Motor neuron (in vitro differentiated cells): ENCODE measurements at regions of chr17 and their contacts with region 1.

Region 1: GRCh38 chr17:49997791-49998703 is 3.0 kb upstream of the DLX3 start:
- ATAC-seq: peak; percentile 27 to 87 (median 76)
- H3K4me3 ChIP-seq: no peak overlapping the region
- H3K27ac ChIP-seq: no peak overlapping the region
- H3K4me1 ChIP-seq: peaks cover 0 to 12% of the 10 kb centered on the region in 2 donors

Region 2: DNA sequence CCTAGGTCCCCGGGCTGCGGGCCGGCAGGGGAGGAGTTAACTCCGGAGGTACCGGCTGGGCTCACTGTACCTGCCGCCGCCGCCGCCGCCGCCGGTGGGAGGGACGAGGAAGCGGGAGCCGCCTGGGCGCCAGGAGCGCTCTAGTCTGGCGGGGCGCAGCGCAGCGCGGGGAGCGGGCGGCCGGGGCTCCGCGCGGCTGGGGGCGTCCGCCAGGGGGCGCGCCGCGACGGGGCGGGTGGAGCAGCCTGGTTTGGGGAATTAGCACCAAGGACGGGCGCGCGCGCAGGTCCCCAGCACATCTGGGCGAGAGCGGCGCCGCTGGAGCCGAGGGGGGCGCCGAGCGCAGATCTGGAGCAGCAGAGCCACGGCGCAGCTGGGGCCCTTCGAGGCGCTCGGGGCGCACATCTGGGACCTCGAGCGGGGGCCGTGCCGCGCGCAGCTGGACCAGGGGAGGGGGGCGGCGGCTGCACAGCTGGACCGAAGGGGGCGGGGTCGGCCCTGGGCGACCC is 422.4 kb before region 1 on chr17 and contains the start of gene NXPH3:
- in situ Hi-C with region 1: loop called in 6 of 9 experiments (anchors 10 to 25 kb)
- ATAC-seq: peak; percentile 28 to 71 (median 41)
- H3K4me3 ChIP-seq: peak within 1 kb of the TSS; percentile 34 to 48 (median 39)
- H3K27ac ChIP-seq: no peak within 1 kb of the TSS
- H3K4me1 ChIP-seq: peaks cover 0 to 4% of the 10 kb centered on the region in 2 donors
- total RNA-seq, gene NXPH3: 0.16 to 1.3 (median 0.39) TPM

Region 3: DNA sequence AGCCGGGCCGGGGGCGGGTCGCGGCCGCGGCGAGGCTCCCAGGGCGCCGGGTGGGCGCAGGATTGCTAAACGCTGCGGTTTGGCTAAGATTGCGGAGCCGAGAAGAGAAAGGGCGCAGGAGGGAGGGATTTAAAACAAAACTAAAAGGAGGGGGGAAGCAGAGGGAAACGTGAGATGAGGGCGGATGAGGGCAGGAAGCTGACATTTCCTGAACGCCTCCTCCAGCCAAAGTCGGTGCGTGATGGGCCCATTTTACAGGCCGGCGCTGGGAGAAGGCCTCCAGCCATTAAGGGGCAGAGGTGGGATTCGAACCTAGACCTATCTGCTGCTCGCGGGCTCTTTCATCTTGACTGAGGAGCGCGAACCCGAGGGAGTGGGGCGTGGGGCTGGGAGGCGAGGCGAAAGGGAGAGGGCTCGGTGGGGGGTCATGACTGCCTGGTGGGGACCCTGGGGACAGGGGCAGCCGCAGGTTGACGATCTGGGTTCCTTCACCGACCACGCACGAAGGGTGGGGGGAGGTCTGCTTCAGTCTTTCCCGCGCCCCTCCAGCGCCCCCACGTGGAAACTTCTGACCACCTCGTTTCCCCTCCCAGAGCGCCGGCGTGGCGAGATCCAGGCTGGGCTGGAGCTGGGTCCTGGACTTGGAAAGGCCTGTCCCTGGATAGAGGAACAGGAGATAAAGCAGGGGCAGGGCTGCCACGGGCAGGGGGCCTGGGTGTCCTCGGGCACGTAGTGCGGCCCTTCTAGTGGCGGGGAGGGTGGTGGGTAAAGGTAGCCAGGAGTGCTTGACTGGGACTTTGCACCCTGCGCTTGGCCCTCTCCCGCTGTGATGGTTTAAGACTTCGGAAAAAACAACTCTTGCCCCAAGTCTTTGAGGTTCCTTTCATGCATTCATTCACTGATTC is 146.4 kb before region 1 on chr17:
- in situ Hi-C with region 1: loop called in 3 of 9 experiments (anchors 10 to 25 kb)
- ATAC-seq: peak; percentile 67 to 89 (median 74)
- H3K4me3 ChIP-seq: peak overlapping the region; percentile 8 to 33 (median 27)
- H3K27ac ChIP-seq: no peak overlapping the region
- H3K4me1 ChIP-seq: peaks cover 3 to 7% of the 10 kb centered on the region in 2 donors

Region 4: DNA sequence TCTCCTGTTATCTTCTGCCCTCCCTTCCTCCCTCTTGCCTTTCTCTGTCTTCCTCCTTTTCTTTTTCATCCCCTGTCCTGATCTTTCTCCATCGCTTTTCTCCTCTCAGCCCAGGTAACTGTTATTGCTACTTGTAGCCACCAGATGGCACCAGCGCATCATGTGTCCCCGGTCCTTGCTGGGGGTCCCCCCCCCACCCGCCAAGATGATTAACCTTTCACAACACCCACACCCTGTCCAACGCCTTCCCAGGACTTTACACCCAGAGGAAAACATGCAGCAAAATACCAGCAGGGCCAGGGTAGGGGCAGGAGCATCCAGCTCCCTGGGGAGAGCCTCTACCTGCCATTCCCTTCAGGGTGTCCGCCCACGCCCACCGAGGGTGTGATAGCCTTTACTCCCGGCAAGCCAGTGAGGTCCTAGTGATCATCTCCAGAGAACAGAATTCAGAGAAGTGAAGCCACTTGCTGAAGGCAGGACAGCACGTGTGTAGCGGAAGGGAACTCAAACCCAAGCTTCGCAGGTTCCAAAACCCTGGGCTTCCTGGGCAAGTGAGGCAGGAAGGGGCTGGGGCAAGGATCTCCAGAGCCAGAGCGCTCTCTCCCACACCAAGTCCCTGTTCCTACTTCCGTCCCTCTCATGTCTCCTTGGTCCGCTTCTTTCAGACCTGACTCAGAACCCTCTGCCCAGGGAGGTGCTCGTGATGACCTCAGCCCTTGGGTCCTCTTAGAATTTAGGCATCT is 136.7 kb before region 1 on chr17:
- in situ Hi-C with region 1: loop called in 5 of 9 experiments (anchors 10 to 25 kb)
- ATAC-seq: peak in 7 of 8 experiments; percentile 7 to 77 (median 22)
- H3K4me3 ChIP-seq: no peak overlapping the region
- H3K27ac ChIP-seq: no peak overlapping the region
- H3K4me1 ChIP-seq: peaks cover 5 to 10% of the 10 kb centered on the region in 2 donors

Region 5: DNA sequence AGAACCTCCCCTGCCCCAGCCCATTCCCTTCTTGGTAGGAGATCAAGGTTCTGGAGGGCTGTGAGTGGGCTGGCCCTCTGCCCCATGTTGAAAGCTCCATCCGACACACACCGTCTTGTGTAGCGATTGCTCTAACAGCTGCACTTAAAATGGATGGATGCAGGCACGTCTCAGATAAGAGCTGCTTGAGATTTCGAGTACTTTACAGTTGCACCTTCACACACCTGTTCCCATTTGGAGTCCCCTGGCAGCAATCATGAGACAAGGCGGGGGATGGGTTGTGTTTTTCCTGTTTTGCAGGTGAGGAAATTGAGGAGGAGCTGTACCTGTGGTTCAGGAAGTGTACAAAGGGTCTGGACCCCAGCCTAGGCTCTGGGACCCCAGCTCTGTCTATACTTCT is 124.6 kb before region 1 on chr17:
- in situ Hi-C with region 1: loop called in 5 of 9 experiments (anchors 10 to 25 kb)
- ATAC-seq: no peak
- H3K4me3 ChIP-seq: no peak overlapping the region
- H3K27ac ChIP-seq: no peak overlapping the region
- H3K4me1 ChIP-seq: no peaks in the 10 kb centered on the region

Region 6: DNA sequence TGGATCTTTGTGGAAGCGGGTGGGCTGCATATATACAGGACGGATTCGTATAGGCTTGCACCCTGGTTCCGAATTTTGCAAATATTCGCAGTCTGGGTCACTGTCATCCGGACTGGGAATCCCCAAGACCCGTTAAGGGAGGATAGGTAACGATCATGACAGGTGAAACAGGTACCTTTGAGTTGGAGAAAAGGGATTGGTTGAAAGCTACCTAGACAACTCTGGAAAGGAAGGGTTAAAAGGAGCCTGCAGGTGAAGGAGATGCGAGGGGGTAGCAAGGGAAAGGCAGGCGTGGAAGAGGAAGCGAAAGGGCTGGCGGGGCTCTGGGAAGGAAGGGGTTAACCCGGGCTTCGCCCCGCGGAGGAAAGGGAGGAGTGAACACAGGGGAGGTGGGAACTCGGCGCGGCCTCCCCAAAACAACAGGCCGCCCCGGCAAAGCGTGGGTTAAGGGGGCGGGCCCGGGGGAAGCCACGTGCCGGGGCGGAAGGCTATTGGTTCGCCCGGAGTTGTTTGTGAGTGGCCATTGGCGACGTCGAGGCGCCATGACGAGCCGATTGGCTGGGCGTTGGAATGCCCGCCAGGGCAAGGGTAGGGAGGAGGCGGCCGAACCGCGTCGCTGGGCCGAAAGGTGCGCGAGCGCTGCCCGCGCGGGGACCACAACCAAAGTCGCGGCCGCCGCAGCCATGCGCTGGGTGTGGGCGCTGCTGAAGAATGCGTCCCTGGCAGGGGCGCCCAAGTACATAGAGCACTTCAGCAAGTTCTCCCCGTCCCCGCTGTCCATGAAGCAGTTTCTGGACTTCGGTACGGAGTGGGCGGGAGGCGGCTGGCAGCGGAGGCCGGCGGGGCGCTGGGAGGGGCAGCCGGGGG is 96.9 kb after region 1 on chr17 and contains the start of gene PDK2:
- in situ Hi-C with region 1: no loop called
- ATAC-seq: peak; percentile 93 to 98 (median 96)
- H3K4me3 ChIP-seq: peak within 1 kb of the TSS; percentile 60 to 94 (median 82)
- H3K27ac ChIP-seq: no peak within 1 kb of the TSS
- H3K4me1 ChIP-seq: peaks cover 12 to 21% of the 10 kb centered on the region in 2 donors
- total RNA-seq, gene PDK2: 7.1 to 53.4 (median 10.7) TPM